B cell (primary cell): ENCODE measurements at regions of chr1 and their contacts with region 1.

Region 1: GRCh38 chr1:37859507-37860345 is at the start of gene MTF1:
- DNase-seq: peak; percentile 98
- ATAC-seq: peak; percentile 98
- H3K4me3 ChIP-seq: peak within 1 kb of the TSS; percentile 72 to 100 (median 95)
- H3K4me3 Mint-ChIP-seq: peak within 1 kb of the TSS; percentile 97
- H3K27ac ChIP-seq: peak within 1 kb of the TSS; percentile 79 to 95
- H3K27ac Mint-ChIP-seq: peak within 1 kb of the TSS; percentile 94
- H3K4me1 ChIP-seq: peaks cover 16 to 18% of the 10 kb centered on the region in 2 donors
- H3K4me1 Mint-ChIP-seq: peaks cover 33% of the 10 kb centered on the region
- H3K27me3 ChIP-seq: no peaks in the 10 kb centered on the region
- H3K27me3 Mint-ChIP-seq: no peaks in the 10 kb centered on the region
- CTCF ChIP-seq: peak; percentile 94
- total RNA-seq, gene MTF1: 34.6 and 36.7 TPM in 2 replicates

Region 2: GRCh38 chr1:37595440-37596319 is 264.0 kb before region 1 on chr1 and contains the start of gene GNL2:
- CTCF ChIA-PET with region 1: no interaction called
- POLR2A ChIA-PET with region 1: no interaction called
- intact Hi-C with region 1: loop called (anchors 1 kb)
- DNase-seq: peak; percentile 99
- ATAC-seq: peak; percentile 98
- H3K4me3 ChIP-seq: peak within 1 kb of the TSS; percentile 67 to 96 (median 92)
- H3K4me3 Mint-ChIP-seq: peak within 1 kb of the TSS; percentile 99
- H3K27ac ChIP-seq: peak within 1 kb of the TSS; percentile 77 to 90
- H3K27ac Mint-ChIP-seq: peak within 1 kb of the TSS; percentile 93
- H3K4me1 ChIP-seq: peaks cover 16 to 20% of the 10 kb centered on the region in 2 donors
- H3K4me1 Mint-ChIP-seq: peaks cover 26% of the 10 kb centered on the region
- H3K27me3 ChIP-seq: peaks cover 0 to 3% (median 0%) of the 10 kb centered on the region in 4 experiments
- H3K27me3 Mint-ChIP-seq: no peaks in the 10 kb centered on the region
- CTCF ChIP-seq: no peak
- total RNA-seq, gene GNL2: 44.0 and 50.6 TPM in 2 replicates

Region 3: GRCh38 chr1:37807555-37808368 is 52.0 kb before region 1 on chr1 and contains the starts of genes C1orf122 and YRDC:
- CTCF ChIA-PET with region 1: interaction called, 20 read pairs
- POLR2A ChIA-PET with region 1: interaction called, 8 read pairs
- intact Hi-C with region 1: loop called (anchors 1 kb)
- DNase-seq: peak; percentile 91
- ATAC-seq: peak; percentile 90
- H3K4me3 ChIP-seq: peak within 1 kb of the TSS; percentile 78 to 88 (median 83)
- H3K4me3 Mint-ChIP-seq: peak within 1 kb of the TSS; percentile 98
- H3K27ac ChIP-seq: peak within 1 kb of the TSS; percentile 68 to 94
- H3K27ac Mint-ChIP-seq: peak within 1 kb of the TSS; percentile 98
- H3K4me1 ChIP-seq: peaks cover 14 to 31% of the 10 kb centered on the region in 2 donors
- H3K4me1 Mint-ChIP-seq: peaks cover 40% of the 10 kb centered on the region
- H3K27me3 ChIP-seq: no peaks in the 10 kb centered on the region
- H3K27me3 Mint-ChIP-seq: no peaks in the 10 kb centered on the region
- CTCF ChIP-seq: no peak
- total RNA-seq, gene C1orf122: 15.7 and 16.9 TPM in 2 replicates
- total RNA-seq, gene YRDC: 12.5 and 14.0 TPM in 2 replicates

Region 4: GRCh38 chr1:37817481-37817880 is 42.2 kb before region 1 on chr1:
- CTCF ChIA-PET with region 1: interaction called, 9 read pairs
- POLR2A ChIA-PET with region 1: no interaction called
- intact Hi-C with region 1: loop called (anchors 1 kb)
- DNase-seq: no peak
- ATAC-seq: no peak
- H3K4me3 ChIP-seq: no peak overlapping the region
- H3K4me3 Mint-ChIP-seq: no peak overlapping the region
- H3K27ac ChIP-seq: no peak overlapping the region
- H3K27ac Mint-ChIP-seq: no peak overlapping the region
- H3K4me1 ChIP-seq: peaks cover 6 to 13% of the 10 kb centered on the region in 2 donors
- H3K4me1 Mint-ChIP-seq: peaks cover 11% of the 10 kb centered on the region
- H3K27me3 ChIP-seq: no peaks in the 10 kb centered on the region
- H3K27me3 Mint-ChIP-seq: no peaks in the 10 kb centered on the region
- CTCF ChIP-seq: no peak

Region 5: GRCh38 chr1:37846647-37847339 is 12.9 kb before region 1 on chr1:
- CTCF ChIA-PET with region 1: interaction called, 23 read pairs
- POLR2A ChIA-PET with region 1: no interaction called
- intact Hi-C with region 1: no loop called
- DNase-seq: peak; percentile 43
- ATAC-seq: peak; percentile 45
- H3K4me3 ChIP-seq: peak overlapping the region in 4 of 5 experiments; percentile 1 to 46 (median 34)
- H3K4me3 Mint-ChIP-seq: peak overlapping the region; percentile 75
- H3K27ac ChIP-seq: peak overlapping the region; percentile 21 to 76
- H3K27ac Mint-ChIP-seq: peak overlapping the region; percentile 78
- H3K4me1 ChIP-seq: peaks cover 28 to 29% of the 10 kb centered on the region in 2 donors
- H3K4me1 Mint-ChIP-seq: peaks cover 35% of the 10 kb centered on the region
- H3K27me3 ChIP-seq: no peaks in the 10 kb centered on the region
- H3K27me3 Mint-ChIP-seq: no peaks in the 10 kb centered on the region
- CTCF ChIP-seq: no peak

Region 6: GRCh38 chr1:37931361-37932158 is 71.8 kb after region 1 on chr1:
- CTCF ChIA-PET with region 1: interaction called, 8 read pairs
- POLR2A ChIA-PET with region 1: no interaction called
- intact Hi-C with region 1: loop called (anchors 1 kb)
- DNase-seq: peak; percentile 97
- ATAC-seq: peak; percentile 99
- H3K4me3 ChIP-seq: peak overlapping the region; percentile 69 to 98 (median 97)
- H3K4me3 Mint-ChIP-seq: peak overlapping the region; percentile 89
- H3K27ac ChIP-seq: peak overlapping the region in 1 of 2 donors; percentile 80
- H3K27ac Mint-ChIP-seq: peak overlapping the region; percentile 83
- H3K4me1 ChIP-seq: peaks cover 18 to 28% of the 10 kb centered on the region in 2 donors
- H3K4me1 Mint-ChIP-seq: peaks cover 42% of the 10 kb centered on the region
- H3K27me3 ChIP-seq: no peaks in the 10 kb centered on the region
- H3K27me3 Mint-ChIP-seq: no peaks in the 10 kb centered on the region
- CTCF ChIP-seq: no peak

Region 7: GRCh38 chr1:38097284-38097898 is 237.7 kb after region 1 on chr1:
- CTCF ChIA-PET with region 1: no interaction called
- POLR2A ChIA-PET with region 1: no interaction called
- intact Hi-C with region 1: no loop called
- DNase-seq: no peak
- ATAC-seq: no peak
- H3K4me3 ChIP-seq: no peak overlapping the region
- H3K4me3 Mint-ChIP-seq: no peak overlapping the region
- H3K27ac ChIP-seq: no peak overlapping the region
- H3K27ac Mint-ChIP-seq: no peak overlapping the region
- H3K4me1 ChIP-seq: no peaks in the 10 kb centered on the region
- H3K4me1 Mint-ChIP-seq: no peaks in the 10 kb centered on the region
- H3K27me3 ChIP-seq: peaks cover 0 to 9% (median 2%) of the 10 kb centered on the region in 4 experiments
- H3K27me3 Mint-ChIP-seq: peaks cover 30% of the 10 kb centered on the region
- CTCF ChIP-seq: no peak